Activated CD4-positive, alpha-beta memory T cell treated with anti-CD3 and anti-CD28 coated beads, Interleukin-2, amount 10 ng/mL, durations not matched to agents 7 days and 5 days (primary cell): ENCODE measurements at regions of chr11 and their contacts with region 1.

Region 1: DNA sequence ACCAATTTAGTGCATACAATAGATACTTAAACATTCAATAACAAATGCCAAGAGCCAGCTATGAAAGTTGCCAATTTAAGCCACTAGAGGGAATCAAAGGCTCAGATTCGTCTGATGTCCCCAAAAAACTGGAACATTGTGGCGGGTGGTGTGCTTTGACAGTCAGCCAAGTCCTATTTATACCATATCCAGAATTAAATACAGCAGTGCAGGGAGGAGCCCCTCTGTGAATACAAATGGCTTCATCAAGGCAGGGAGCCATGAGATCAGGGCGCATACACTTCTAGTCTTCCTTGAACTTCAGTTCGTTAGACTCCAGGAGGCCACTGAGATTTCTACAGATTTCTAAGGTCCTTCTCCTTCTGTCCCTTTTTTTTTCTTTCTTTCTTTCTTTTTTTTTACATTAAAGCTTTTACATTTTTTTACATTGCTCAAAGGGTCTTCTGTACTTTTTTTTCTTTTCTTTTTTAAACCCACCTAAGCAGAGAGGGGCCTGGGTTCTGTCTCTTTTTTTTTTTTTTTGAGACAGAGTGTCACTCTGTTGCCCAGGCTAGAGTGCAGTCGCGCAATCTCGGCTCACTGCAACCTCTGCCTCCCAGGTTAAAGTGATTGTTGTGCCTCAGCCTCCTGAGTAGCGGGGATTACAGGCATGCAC is 41.5 kb upstream of the HSPA8 start:
- DNase-seq: peak; percentile 36
- H3K4me3 Mint-ChIP-seq: no peak overlapping the region
- H3K27ac Mint-ChIP-seq: no peak overlapping the region
- H3K4me1 Mint-ChIP-seq: peaks cover 14% of the 10 kb centered on the region
- H3K27me3 Mint-ChIP-seq: no peaks in the 10 kb centered on the region

Region 2: GRCh38 chr11:123054301-123055065 is 49.0 kb before region 1 on chr11:
- CTCF ChIA-PET with region 1: interaction called, 109 read pairs
- POLR2A ChIA-PET with region 1: interaction called, 21 read pairs
- DNase-seq: no peak
- H3K4me3 Mint-ChIP-seq: no peak overlapping the region
- H3K27ac Mint-ChIP-seq: peak overlapping the region; percentile 67
- H3K4me1 Mint-ChIP-seq: peaks cover 54% of the 10 kb centered on the region
- H3K27me3 Mint-ChIP-seq: no peaks in the 10 kb centered on the region

Region 3: DNA sequence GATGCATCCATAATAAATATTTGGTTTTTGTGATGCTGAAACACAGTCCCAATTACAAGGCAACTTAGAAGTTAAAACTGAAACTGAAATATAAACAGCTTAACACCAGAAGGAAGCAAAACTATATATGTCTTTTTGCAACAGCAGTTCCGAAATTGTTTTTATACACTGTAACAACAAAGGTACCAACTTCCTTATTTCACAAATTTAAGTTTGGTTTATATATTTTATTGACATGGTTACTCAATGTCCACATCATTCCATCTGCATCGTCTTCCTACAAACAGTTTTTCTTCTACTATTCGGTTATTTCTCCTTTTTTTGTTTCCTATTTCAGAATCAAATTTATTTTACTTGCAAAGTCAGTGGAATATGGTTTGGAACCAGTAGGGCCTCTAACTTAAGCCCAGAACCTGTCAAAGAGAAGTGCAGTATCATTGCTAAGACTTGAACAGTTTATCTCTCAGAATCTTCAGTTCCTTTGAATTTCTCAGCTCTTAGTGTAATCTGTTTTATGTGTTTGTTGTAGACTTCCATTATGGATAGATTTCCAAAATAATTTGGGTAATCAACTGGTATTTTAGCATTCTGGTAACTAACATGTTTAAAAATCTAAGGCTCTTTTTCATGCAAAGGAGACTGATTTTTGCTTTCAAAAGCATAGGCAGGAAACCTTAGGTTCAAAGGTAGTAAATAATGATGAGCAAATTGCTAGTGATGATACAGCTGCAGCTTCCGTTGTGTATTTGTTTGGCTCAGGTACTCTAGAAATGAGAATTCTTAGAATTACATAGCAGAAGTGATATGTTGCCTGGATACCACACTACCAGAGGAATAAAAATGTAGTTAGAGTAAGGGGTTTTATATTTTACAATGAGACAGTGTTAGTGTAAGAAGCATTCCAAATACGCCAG is 33.3 kb before region 1 on chr11:
- CTCF ChIA-PET with region 1: interaction called, 6 read pairs
- POLR2A ChIA-PET with region 1: interaction called, 15 read pairs
- DNase-seq: no peak
- H3K4me3 Mint-ChIP-seq: peak overlapping the region; percentile 79
- H3K27ac Mint-ChIP-seq: peak overlapping the region; percentile 99
- H3K4me1 Mint-ChIP-seq: peaks cover 61% of the 10 kb centered on the region
- H3K27me3 Mint-ChIP-seq: no peaks in the 10 kb centered on the region

Region 4: DNA sequence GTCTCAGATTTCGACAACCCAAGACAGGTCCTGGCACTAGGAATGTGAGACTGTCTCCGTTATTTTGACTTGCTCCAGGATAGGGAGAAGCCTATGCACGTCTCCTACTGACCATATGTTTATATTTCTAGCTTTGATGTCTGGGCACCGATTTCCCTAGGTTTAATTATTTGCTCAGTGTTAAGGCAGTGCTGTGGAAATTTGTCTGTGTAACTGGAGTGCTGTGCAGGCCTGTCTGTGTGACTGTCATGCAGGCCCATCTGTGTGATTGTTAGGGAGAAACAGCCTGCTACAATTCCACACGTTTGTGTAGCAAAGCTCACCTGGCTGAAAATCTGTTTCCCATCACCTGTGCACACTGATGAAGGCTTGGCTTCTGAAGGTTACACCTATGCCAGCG is 11.9 kb before region 1 on chr11:
- CTCF ChIA-PET with region 1: interaction called, 18 read pairs
- POLR2A ChIA-PET with region 1: interaction called, 3 read pairs
- DNase-seq: no peak
- H3K4me3 Mint-ChIP-seq: no peak overlapping the region
- H3K27ac Mint-ChIP-seq: no peak overlapping the region
- H3K4me1 Mint-ChIP-seq: peaks cover 23% of the 10 kb centered on the region
- H3K27me3 Mint-ChIP-seq: no peaks in the 10 kb centered on the region

Region 5: GRCh38 chr11:123122341-123122740 is 18.9 kb after region 1 on chr11:
- CTCF ChIA-PET with region 1: no interaction called
- POLR2A ChIA-PET with region 1: no interaction called
- DNase-seq: no peak
- H3K4me3 Mint-ChIP-seq: no peak overlapping the region
- H3K27ac Mint-ChIP-seq: no peak overlapping the region
- H3K4me1 Mint-ChIP-seq: peaks cover 11% of the 10 kb centered on the region
- H3K27me3 Mint-ChIP-seq: peaks cover 2% of the 10 kb centered on the region

Region 6: GRCh38 chr11:123206791-123207434 is 103.5 kb after region 1 on chr11:
- CTCF ChIA-PET with region 1: no interaction called
- POLR2A ChIA-PET with region 1: no interaction called
- DNase-seq: no peak
- H3K4me3 Mint-ChIP-seq: no peak overlapping the region
- H3K27ac Mint-ChIP-seq: no peak overlapping the region
- H3K4me1 Mint-ChIP-seq: no peaks in the 10 kb centered on the region
- H3K27me3 Mint-ChIP-seq: peaks cover 52% of the 10 kb centered on the region

Region 7: GRCh38 chr11:123261345-123262106 is 158.1 kb after region 1 on chr11:
- CTCF ChIA-PET with region 1: interaction called, 20 read pairs
- POLR2A ChIA-PET with region 1: no interaction called
- DNase-seq: peak; percentile 73
- H3K4me3 Mint-ChIP-seq: no peak overlapping the region
- H3K27ac Mint-ChIP-seq: no peak overlapping the region
- H3K4me1 Mint-ChIP-seq: peaks cover 17% of the 10 kb centered on the region
- H3K27me3 Mint-ChIP-seq: peaks cover 27% of the 10 kb centered on the region